ENCODE measurements at regions of chr7 and their contacts with region 1.

Region 1: GRCh38 chr7:7968543-7969305 is at the start of gene GLCCI1:
- DNase-seq: peak; percentile 91 to 99 (median 96)
- ATAC-seq: peak; percentile 90
- H3K4me3 ChIP-seq: peak within 1 kb of the TSS; percentile 86
- H3K4me3 Mint-ChIP-seq: peak within 1 kb of the TSS; percentile 94
- H3K27ac ChIP-seq: peak within 1 kb of the TSS; percentile 69 to 92
- H3K27ac Mint-ChIP-seq: peak within 1 kb of the TSS; percentile 78
- H3K4me1 ChIP-seq: peaks cover 14% of the 10 kb centered on the region
- H3K4me1 Mint-ChIP-seq: peaks cover 36% of the 10 kb centered on the region
- H3K27me3 ChIP-seq: no peaks in the 10 kb centered on the region
- H3K27me3 Mint-ChIP-seq: no peaks in the 10 kb centered on the region
- CTCF ChIP-seq: no peak
- total RNA-seq, gene GLCCI1: 22.2 to 22.3 TPM

Region 2: DNA sequence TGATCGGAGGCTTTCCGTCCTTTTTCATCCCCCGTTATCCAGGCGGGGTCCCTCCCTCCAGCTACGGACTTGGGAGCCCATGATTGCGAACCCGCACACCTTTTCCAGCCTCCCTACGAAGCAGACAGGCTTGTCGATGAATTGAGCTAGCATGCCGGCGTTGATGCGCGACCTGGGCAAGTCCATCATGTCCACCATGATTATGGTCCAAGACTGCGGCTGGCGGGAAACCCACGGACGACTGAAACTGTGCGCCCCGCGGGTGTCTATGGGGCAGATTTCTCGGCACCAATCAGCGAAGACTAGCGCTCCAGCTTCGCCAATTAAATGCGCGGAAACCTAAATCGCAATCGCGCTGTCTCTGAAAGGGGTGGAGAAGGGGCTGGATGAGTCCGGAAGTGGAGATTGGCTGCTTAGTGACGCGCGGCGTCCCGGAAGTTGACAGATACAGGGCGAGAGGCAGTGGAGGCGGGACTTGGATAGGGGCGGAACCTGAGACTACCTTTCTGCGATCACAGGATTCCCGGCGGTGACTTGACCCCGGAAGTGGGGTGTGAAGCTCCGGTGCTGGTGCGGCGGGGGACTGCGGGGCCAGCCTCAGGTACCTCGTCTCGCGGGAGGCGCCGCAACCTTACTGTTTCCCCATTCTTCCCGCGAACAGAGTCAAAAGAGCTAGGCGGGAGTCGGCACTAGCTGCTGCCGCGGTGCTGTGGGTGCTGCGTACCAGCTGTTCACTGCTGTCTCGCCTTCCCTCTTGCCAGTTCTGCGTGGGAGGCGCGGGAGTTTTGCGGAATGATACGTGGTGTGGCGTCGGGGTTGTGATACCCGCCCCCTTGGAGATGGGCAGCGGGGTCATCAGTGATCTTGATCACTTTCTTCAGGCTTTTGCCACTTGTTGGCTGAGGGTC is 328.2 kb before region 1 on chr7 and contains the start of gene UMAD1:
- CTCF ChIA-PET with region 1: no interaction called
- POLR2A ChIA-PET with region 1: interaction called, 92 read pairs
- intact Hi-C with region 1: loop called (anchors 1 to 2 kb)
- DNase-seq: peak; percentile 94 to 100 (median 98)
- ATAC-seq: peak; percentile 83
- H3K4me3 ChIP-seq: peak within 1 kb of the TSS; percentile 88
- H3K4me3 Mint-ChIP-seq: peak within 1 kb of the TSS; percentile 90
- H3K27ac ChIP-seq: peak within 1 kb of the TSS; percentile 98 to 99
- H3K27ac Mint-ChIP-seq: peak within 1 kb of the TSS; percentile 98
- H3K4me1 ChIP-seq: peaks cover 17% of the 10 kb centered on the region
- H3K4me1 Mint-ChIP-seq: peaks cover 59% of the 10 kb centered on the region
- H3K27me3 ChIP-seq: no peaks in the 10 kb centered on the region
- H3K27me3 Mint-ChIP-seq: no peaks in the 10 kb centered on the region
- CTCF ChIP-seq: no peak
- total RNA-seq, gene UMAD1: 11.0 to 15.3 TPM

Region 3: DNA sequence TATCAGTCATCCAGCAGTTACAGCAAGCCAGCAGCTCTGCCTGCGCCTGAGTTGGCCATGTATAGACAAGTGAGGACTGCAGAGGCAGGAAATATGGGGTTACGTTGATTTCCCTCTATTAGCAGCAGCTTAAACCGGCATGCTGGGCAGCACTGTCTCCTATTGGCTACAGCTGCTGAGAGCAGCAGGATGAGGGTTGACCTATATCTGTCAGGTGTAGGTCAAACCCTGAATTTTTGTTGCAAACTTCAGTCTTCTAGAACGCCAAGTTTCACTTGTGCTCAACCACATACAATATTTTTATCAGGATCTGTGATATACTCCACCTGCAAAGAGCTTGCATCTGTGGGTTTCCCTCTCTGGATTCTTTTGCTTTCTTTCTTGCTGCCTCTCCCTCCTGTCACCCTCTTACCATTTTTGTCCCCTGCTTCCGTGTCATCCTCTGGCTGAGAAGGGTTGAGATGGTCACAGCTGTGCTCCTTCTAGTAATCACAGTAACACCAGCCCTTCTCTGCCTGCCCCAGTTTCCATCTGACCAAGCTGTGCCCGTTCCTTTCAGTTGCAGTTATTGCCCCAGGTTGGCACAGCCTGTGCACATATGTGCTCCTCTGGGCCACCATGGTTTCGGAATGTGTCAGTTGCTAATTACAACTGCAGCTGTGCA is 24.0 kb before region 1 on chr7:
- CTCF ChIA-PET with region 1: interaction called, 3 read pairs
- POLR2A ChIA-PET with region 1: interaction called, 87 read pairs
- intact Hi-C with region 1: no loop called
- DNase-seq: peak; percentile 14 to 87 (median 32)
- ATAC-seq: peak; percentile 93
- H3K4me3 ChIP-seq: peak overlapping the region; percentile 45
- H3K4me3 Mint-ChIP-seq: peak overlapping the region; percentile 60
- H3K27ac ChIP-seq: peak overlapping the region; percentile 30 to 69
- H3K27ac Mint-ChIP-seq: peak overlapping the region; percentile 77
- H3K4me1 ChIP-seq: peaks cover 23% of the 10 kb centered on the region
- H3K4me1 Mint-ChIP-seq: peaks cover 30% of the 10 kb centered on the region
- H3K27me3 ChIP-seq: no peaks in the 10 kb centered on the region
- H3K27me3 Mint-ChIP-seq: no peaks in the 10 kb centered on the region
- CTCF ChIP-seq: no peak

Region 4: GRCh38 chr7:7996576-7996975 is 27.9 kb after region 1 on chr7:
- CTCF ChIA-PET with region 1: interaction called, 3 read pairs
- POLR2A ChIA-PET with region 1: interaction called, 54 read pairs
- intact Hi-C with region 1: no loop called
- DNase-seq: no peak
- ATAC-seq: no peak
- H3K4me3 ChIP-seq: no peak overlapping the region
- H3K4me3 Mint-ChIP-seq: no peak overlapping the region
- H3K27ac ChIP-seq: no peak overlapping the region
- H3K27ac Mint-ChIP-seq: peak overlapping the region; percentile 48
- H3K4me1 ChIP-seq: peaks cover 4% of the 10 kb centered on the region
- H3K4me1 Mint-ChIP-seq: peaks cover 33% of the 10 kb centered on the region
- H3K27me3 ChIP-seq: no peaks in the 10 kb centered on the region
- H3K27me3 Mint-ChIP-seq: no peaks in the 10 kb centered on the region
- CTCF ChIP-seq: no peak

Region 5: GRCh38 chr7:8035647-8036518 is 67.2 kb after region 1 on chr7:
- CTCF ChIA-PET with region 1: interaction called, 4 read pairs
- POLR2A ChIA-PET with region 1: interaction called, 12 read pairs
- intact Hi-C with region 1: no loop called
- DNase-seq: peak in 3 of 14 experiments; percentile 62 to 65 (median 64)
- ATAC-seq: peak; percentile 85
- H3K4me3 ChIP-seq: no peak overlapping the region
- H3K4me3 Mint-ChIP-seq: no peak overlapping the region
- H3K27ac ChIP-seq: no peak overlapping the region
- H3K27ac Mint-ChIP-seq: peak overlapping the region; percentile 69
- H3K4me1 ChIP-seq: peaks cover 19% of the 10 kb centered on the region
- H3K4me1 Mint-ChIP-seq: peaks cover 39% of the 10 kb centered on the region
- H3K27me3 ChIP-seq: no peaks in the 10 kb centered on the region
- H3K27me3 Mint-ChIP-seq: no peaks in the 10 kb centered on the region
- CTCF ChIP-seq: peak; percentile 65

Region 6: GRCh38 chr7:8056431-8056830 is 87.7 kb after region 1 on chr7:
- CTCF ChIA-PET with region 1: no interaction called
- POLR2A ChIA-PET with region 1: no interaction called
- intact Hi-C with region 1: no loop called
- DNase-seq: no peak
- ATAC-seq: no peak
- H3K4me3 ChIP-seq: no peak overlapping the region
- H3K4me3 Mint-ChIP-seq: no peak overlapping the region
- H3K27ac ChIP-seq: no peak overlapping the region
- H3K27ac Mint-ChIP-seq: no peak overlapping the region
- H3K4me1 ChIP-seq: no peaks in the 10 kb centered on the region
- H3K4me1 Mint-ChIP-seq: peaks cover 29% of the 10 kb centered on the region
- H3K27me3 ChIP-seq: no peaks in the 10 kb centered on the region
- H3K27me3 Mint-ChIP-seq: no peaks in the 10 kb centered on the region
- CTCF ChIP-seq: no peak

Region 7: GRCh38 chr7:8149222-8149621 is 180.5 kb after region 1 on chr7:
- CTCF ChIA-PET with region 1: no interaction called
- POLR2A ChIA-PET with region 1: interaction called, 11 read pairs
- intact Hi-C with region 1: no loop called
- DNase-seq: peak in 2 of 14 experiments; percentile 32 to 69
- ATAC-seq: peak; percentile 69
- H3K4me3 ChIP-seq: peak overlapping the region; percentile 3
- H3K4me3 Mint-ChIP-seq: peak overlapping the region; percentile 43
- H3K27ac ChIP-seq: peak overlapping the region in 1 of 2 donors; percentile 19
- H3K27ac Mint-ChIP-seq: peak overlapping the region; percentile 90
- H3K4me1 ChIP-seq: peaks cover 38% of the 10 kb centered on the region
- H3K4me1 Mint-ChIP-seq: peaks cover 85% of the 10 kb centered on the region
- H3K27me3 ChIP-seq: no peaks in the 10 kb centered on the region
- H3K27me3 Mint-ChIP-seq: no peaks in the 10 kb centered on the region
- CTCF ChIP-seq: no peak

Region 8: DNA sequence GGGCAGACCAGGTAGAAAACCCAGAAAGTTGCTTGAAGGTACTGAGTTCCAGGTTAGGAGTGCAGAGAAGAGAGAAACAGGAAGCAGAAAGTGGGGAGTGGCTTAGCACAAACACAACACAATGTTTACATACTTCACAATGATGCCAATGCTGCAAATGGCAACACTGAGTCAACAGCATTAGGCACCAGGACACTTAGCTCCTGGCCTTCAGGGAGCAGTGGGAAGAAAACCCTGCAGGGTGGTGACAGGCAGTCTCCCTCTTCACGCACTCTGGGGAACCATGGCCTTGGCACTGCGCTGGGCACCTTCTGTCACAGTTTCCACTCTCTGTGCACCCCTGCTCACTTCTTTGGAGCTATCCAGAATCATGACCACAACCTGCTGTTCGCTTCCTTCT is 285.9 kb after region 1 on chr7:
- CTCF ChIA-PET with region 1: no interaction called
- POLR2A ChIA-PET with region 1: no interaction called
- intact Hi-C with region 1: no loop called
- DNase-seq: no peak
- ATAC-seq: no peak
- H3K4me3 ChIP-seq: no peak overlapping the region
- H3K4me3 Mint-ChIP-seq: no peak overlapping the region
- H3K27ac ChIP-seq: no peak overlapping the region
- H3K27ac Mint-ChIP-seq: no peak overlapping the region
- H3K4me1 ChIP-seq: no peaks in the 10 kb centered on the region
- H3K4me1 Mint-ChIP-seq: no peaks in the 10 kb centered on the region
- H3K27me3 ChIP-seq: peaks cover 2 to 12% of the 10 kb centered on the region in 2 experiments
- H3K27me3 Mint-ChIP-seq: peaks cover 8% of the 10 kb centered on the region
- CTCF ChIP-seq: no peak

Region 9: GRCh38 chr7:8549046-8549445 is 580.3 kb after region 1 on chr7:
- CTCF ChIA-PET with region 1: no interaction called
- POLR2A ChIA-PET with region 1: no interaction called
- intact Hi-C with region 1: no loop called
- DNase-seq: no peak
- ATAC-seq: no peak
- H3K4me3 ChIP-seq: no peak overlapping the region
- H3K4me3 Mint-ChIP-seq: no peak overlapping the region
- H3K27ac ChIP-seq: no peak overlapping the region
- H3K27ac Mint-ChIP-seq: no peak overlapping the region
- H3K4me1 ChIP-seq: no peaks in the 10 kb centered on the region
- H3K4me1 Mint-ChIP-seq: no peaks in the 10 kb centered on the region
- H3K27me3 ChIP-seq: no peaks in the 10 kb centered on the region
- H3K27me3 Mint-ChIP-seq: no peaks in the 10 kb centered on the region
- CTCF ChIP-seq: no peak

Measured in CD4-positive, alpha-beta T cell (primary cell).